BJ (cell line): ENCODE measurements at regions of chr12 and their contacts with region 1.

Region 1: DNA sequence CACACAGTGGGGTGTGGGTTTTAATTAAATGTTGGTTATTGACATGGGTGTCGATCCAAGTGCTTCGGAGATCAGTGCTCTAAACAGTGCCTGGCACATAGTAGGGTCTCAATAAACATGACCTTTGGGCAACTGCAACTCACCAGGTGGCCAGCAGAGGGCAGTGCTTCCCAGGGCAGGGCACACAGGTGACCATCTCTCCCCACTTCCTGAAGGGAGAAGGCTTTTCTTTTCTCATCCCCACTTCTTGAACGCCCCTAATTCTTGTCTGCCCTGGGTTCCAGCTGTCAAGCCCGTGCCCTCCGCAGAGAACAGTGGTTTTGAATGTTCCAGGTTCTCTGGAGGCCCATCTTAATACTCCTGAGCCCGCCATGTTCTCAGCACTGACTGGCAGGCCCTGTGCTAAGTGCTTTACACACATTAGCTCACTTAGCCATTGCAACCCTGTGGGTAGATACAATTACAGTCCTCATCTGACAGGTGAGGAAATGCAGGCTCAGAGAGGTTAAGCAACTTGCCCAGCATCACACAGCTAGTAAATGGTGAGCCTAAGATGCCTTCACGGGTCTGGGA is 16.3 kb downstream of the RAPGEF3 start:
- DNase-seq: no peak
- H3K4me3 ChIP-seq: no peak overlapping the region
- H3K27me3 ChIP-seq: peaks cover 6% of the 10 kb centered on the region
- CTCF ChIP-seq: peak; percentile 99

Region 2: DNA sequence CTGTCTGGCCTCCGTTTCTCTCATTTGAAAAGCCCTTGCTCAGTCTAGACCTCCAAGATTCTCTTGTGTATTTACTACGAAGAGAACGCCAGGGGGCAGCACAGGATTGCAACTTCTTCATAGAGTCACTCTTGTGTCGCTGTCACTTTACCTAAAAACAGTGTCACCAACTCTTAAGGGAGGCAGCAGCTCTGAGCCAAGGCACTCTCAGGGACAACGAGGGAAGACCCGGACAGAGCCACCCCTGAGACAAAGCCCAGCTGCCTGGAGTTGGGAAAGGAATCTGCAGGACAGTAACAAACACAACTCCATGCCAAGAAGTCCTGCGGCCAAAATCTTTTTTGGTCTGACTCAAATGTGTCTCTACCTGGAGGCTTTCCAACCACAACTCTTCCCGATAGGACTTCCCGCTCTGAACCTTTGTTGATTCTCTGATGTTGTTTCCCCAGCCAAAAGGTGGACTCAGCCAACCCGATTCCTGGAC is 26.9 kb before region 1 on chr12:
- CTCF ChIA-PET with region 1: interaction called, 168 read pairs
- POLR2A ChIA-PET with region 1: no interaction called
- DNase-seq: no peak
- H3K4me3 ChIP-seq: no peak overlapping the region
- H3K27me3 ChIP-seq: no peaks in the 10 kb centered on the region
- CTCF ChIP-seq: peak; percentile 80

Region 3: DNA sequence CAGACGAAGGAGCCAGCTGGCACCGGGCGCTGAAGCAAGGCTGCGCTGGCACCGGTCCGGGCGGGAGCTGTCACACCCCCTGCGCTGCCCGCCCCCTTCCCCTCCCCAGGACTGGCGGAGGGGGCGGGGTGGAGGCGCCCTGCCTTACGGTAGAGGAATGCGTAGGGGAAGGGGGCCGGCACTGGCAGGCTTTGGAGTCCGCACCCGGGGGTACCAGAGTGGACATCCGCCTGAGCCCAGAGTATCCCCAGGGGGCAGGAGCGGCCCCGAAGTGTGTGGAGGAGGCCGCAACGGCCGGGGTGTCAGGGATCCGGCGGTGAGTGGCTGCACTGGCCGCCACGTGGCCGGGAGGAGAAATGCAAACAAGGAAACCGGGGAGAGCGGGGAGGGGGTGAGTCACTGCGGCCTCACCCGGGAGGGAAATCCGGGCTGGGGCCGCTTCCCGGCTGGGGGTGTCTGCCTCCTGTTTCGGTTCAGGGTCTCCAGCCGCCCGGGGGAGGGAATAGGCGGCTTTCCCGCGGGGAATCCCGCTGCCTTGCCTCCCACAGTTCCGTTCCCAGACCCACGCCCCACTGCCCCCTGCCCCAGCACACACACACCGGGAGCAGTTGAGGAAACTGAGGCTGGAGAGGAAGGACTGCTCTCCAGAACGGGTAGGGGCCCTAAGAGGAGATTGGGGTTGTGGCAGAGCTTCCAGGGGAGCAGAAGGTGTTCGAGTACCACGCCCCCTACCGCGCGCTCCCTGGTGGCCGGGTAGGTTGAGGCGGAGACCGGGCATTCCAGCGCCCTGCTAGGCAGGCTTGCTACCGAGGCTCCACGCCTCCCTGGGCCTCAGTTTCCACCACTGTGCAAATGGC is 16.7 kb after region 1 on chr12 and contains the start of gene RAPGEF3:
- CTCF ChIA-PET with region 1: interaction called, 107 read pairs
- POLR2A ChIA-PET with region 1: no interaction called
- DNase-seq: no peak
- H3K4me3 ChIP-seq: peak within 1 kb of the TSS; percentile 53
- H3K27me3 ChIP-seq: no peaks in the 10 kb centered on the region
- CTCF ChIP-seq: peak; percentile 65
- polyA plus RNA-seq, gene RAPGEF3: 1.3 and 2.4 TPM in 2 replicates

Region 4: DNA sequence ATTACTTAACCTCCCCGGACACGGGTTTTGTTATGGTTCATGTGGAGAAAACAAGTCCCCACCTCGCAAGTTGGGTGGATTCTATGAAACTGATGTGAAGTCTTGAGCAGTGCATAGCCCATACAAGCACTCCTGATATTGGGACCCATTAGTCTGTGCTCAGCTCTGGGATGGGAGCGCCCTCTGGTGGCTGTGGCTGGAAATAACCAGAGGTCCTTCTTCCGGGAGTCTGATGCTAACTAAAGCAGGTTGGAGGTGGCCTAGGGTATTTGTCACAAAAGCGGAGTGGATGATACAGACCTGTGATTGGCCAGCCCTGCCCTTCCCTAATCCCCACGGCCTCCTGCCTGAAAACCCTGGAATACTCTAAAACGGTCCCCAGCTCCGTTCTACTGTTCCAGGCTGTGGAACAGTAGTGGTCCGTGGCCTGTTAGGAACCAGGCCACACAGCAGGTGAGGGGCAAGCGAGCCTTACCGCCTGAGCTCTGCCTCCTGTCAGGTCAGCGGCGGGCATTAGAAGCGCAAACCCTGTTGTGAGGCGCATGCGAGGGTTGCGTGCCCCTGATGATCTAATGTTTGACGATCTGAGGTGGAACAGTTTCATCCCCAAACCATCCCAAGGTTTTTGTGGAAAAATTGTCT is 37.1 kb after region 1 on chr12:
- CTCF ChIA-PET with region 1: interaction called, 454 read pairs
- POLR2A ChIA-PET with region 1: no interaction called
- DNase-seq: peak; percentile 23
- H3K4me3 ChIP-seq: no peak overlapping the region
- H3K27me3 ChIP-seq: no peaks in the 10 kb centered on the region
- CTCF ChIP-seq: peak; percentile 94

Region 5: GRCh38 chr12:47812797-47813510 is 70.6 kb after region 1 on chr12:
- CTCF ChIA-PET with region 1: interaction called, 15 read pairs
- POLR2A ChIA-PET with region 1: no interaction called
- DNase-seq: peak; percentile 59
- H3K4me3 ChIP-seq: peak overlapping the region; percentile 18
- H3K27me3 ChIP-seq: no peaks in the 10 kb centered on the region
- CTCF ChIP-seq: no peak